Calu3 (cell line): ENCODE measurements at regions of chr3 and their contacts with region 1.

Region 1: GRCh38 chr3:179801263-179801662 is 148.4 kb downstream of the USP13 start:
- DNase-seq: no peak
- H3K4me3 Mint-ChIP-seq: no peak overlapping the region
- H3K27ac Mint-ChIP-seq: no peak overlapping the region
- H3K4me1 Mint-ChIP-seq: no peaks in the 10 kb centered on the region
- H3K27me3 Mint-ChIP-seq: no peaks in the 10 kb centered on the region
- CTCF ChIP-seq: no peak

Region 2: GRCh38 chr3:179840985-179841384 is 39.7 kb after region 1 on chr3:
- CTCF ChIA-PET with region 1: no interaction called
- intact Hi-C with region 1: no loop called
- DNase-seq: peak; percentile 70
- H3K4me3 Mint-ChIP-seq: no peak overlapping the region
- H3K27ac Mint-ChIP-seq: peak overlapping the region; percentile 8
- H3K4me1 Mint-ChIP-seq: peaks cover 14% of the 10 kb centered on the region
- H3K27me3 Mint-ChIP-seq: no peaks in the 10 kb centered on the region
- CTCF ChIP-seq: no peak

Region 3: GRCh38 chr3:180278583-180279188 is 477.4 kb after region 1 on chr3:
- CTCF ChIA-PET with region 1: interaction called, 12 read pairs
- intact Hi-C with region 1: no loop called
- DNase-seq: no peak
- H3K4me3 Mint-ChIP-seq: no peak overlapping the region
- H3K27ac Mint-ChIP-seq: peak overlapping the region; percentile 2
- H3K4me1 Mint-ChIP-seq: peaks cover 41% of the 10 kb centered on the region
- H3K27me3 Mint-ChIP-seq: no peaks in the 10 kb centered on the region
- CTCF ChIP-seq: no peak